Activated naive CD4-positive, alpha-beta T cell treated with anti-CD3 and anti-CD28 coated beads for 36 hours (primary cell): ENCODE measurements at regions of chr4 and their contacts with region 1.

Region 1: GRCh38 chr4:87006676-87007527 is 72.1 kb downstream of the AFF1 start:
- DNase-seq: peak; percentile 81
- H3K4me3 Mint-ChIP-seq: peak overlapping the region; percentile 89
- H3K27ac Mint-ChIP-seq: peak overlapping the region; percentile 96
- H3K4me1 Mint-ChIP-seq: peaks cover 50% of the 10 kb centered on the region
- H3K27me3 Mint-ChIP-seq: no peaks in the 10 kb centered on the region

Region 2: GRCh38 chr4:86934771-86935565 is 71.9 kb before region 1 on chr4 and contains the start of gene AFF1:
- CTCF ChIA-PET with region 1: interaction called, 13 read pairs
- intact Hi-C with region 1: loop called (anchors 1 kb)
- DNase-seq: peak; percentile 89
- H3K4me3 Mint-ChIP-seq: peak within 1 kb of the TSS; percentile 87
- H3K27ac Mint-ChIP-seq: peak within 1 kb of the TSS; percentile 92
- H3K4me1 Mint-ChIP-seq: peaks cover 40% of the 10 kb centered on the region
- H3K27me3 Mint-ChIP-seq: no peaks in the 10 kb centered on the region
- total RNA-seq, gene AFF1: 46.6 to 50.6 TPM

Region 3: DNA sequence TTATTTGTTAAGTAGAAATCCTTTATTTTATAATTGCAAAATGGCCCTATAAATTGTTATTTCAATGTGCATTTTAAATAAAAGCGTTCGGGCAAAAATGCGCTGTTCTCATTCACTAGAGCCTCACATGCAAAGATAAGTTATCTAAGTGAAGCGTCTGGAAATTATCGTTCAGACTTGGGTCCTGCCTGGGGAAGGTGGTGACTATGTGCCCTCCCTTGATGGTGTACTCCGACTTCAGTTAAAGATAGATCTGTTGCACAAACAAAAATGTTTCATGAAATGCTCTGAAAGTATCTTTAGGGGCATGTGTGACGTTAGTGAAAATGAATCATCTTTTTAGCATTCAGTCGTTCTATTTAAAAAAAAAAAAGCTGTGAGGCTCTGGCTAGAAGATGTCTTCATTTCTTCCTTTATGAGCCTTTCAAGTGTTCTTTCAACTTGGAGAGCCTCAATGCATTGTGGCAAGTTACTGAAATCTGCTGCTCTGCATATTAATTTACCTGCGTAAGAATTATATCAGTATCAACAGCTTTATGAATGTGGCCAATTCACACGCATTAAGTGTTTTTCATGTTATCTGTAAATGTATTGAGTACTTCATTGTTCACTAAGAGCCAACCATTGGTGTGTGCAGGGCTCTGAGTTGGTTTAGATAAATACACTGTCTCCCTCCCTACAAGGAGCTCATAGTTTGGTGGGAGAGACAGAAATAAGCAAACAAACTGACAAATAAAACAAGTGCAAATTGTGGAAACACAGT is 10.9 kb after region 1 on chr4:
- CTCF ChIA-PET with region 1: interaction called, 5 read pairs
- intact Hi-C with region 1: loop called (anchors 1 kb)
- DNase-seq: peak; percentile 37
- H3K4me3 Mint-ChIP-seq: no peak overlapping the region
- H3K27ac Mint-ChIP-seq: peak overlapping the region; percentile 88
- H3K4me1 Mint-ChIP-seq: peaks cover 82% of the 10 kb centered on the region
- H3K27me3 Mint-ChIP-seq: no peaks in the 10 kb centered on the region

Region 4: GRCh38 chr4:87093443-87094123 is 86.7 kb after region 1 on chr4:
- CTCF ChIA-PET with region 1: interaction called, 3 read pairs
- intact Hi-C with region 1: loop called (anchors 1 kb)
- DNase-seq: peak; percentile 66
- H3K4me3 Mint-ChIP-seq: no peak overlapping the region
- H3K27ac Mint-ChIP-seq: peak overlapping the region; percentile 53
- H3K4me1 Mint-ChIP-seq: peaks cover 44% of the 10 kb centered on the region
- H3K27me3 Mint-ChIP-seq: no peaks in the 10 kb centered on the region

Region 5: DNA sequence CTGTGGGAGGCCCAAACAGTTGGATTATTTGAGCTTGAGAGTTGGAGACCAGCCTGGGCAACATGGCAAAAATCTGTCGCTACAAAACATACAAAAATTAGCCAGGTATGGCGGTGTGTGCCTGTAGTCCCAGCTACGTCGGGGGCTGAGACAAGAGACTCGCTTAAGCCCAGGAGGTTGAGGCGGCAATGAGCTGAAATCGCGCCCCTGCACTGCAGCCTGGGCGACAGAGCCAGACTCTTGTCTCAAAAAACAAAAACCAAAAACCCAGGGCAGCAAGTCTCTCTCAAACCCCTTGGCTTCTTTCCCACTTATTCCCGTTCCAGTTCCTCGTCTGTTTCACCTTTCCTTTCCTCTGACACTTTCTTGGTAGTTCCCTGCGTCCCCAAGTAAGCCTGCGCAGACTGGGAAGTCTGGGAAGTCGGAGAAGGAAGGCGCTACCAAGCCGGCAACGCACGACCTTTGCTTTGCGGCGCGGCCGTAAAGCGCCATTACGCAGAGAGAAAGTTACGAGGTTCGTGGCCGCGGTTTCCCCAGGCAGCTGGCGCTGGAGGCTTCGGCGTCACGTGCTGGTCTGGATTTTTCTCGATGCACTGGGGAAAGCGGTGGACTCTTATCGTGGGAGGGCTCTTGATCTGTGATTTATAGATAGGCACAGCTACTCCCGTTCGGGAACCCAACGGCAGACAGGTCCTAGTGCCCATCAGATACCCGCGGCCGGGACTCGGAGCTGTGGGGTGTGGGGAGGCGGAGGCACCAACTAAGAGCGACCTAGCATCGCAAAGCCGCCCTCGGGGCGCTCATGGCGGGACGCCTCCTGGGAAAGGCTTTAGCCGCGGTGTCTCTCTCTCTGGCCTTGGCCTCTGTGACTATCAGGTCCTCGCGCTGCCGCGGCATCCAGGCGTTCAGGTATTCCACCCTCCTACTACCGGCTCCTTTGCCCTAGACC is 415.5 kb after region 1 on chr4 and contains the start of gene NUDT9:
- CTCF ChIA-PET with region 1: no interaction called
- intact Hi-C with region 1: loop called (anchors 2 kb)
- DNase-seq: peak; percentile 91
- H3K4me3 Mint-ChIP-seq: peak within 1 kb of the TSS; percentile 98
- H3K27ac Mint-ChIP-seq: peak within 1 kb of the TSS; percentile 97
- H3K4me1 Mint-ChIP-seq: peaks cover 32% of the 10 kb centered on the region
- H3K27me3 Mint-ChIP-seq: no peaks in the 10 kb centered on the region
- total RNA-seq, gene NUDT9: 12.1 to 13.4 TPM